ENCODE measurements at regions of chr1 and their contacts with region 1.

Region 1: GRCh38 chr1:161038523-161039153 is at the start of gene TSTD1:
- DNase-seq: peak; percentile 89
- H3K4me3 Mint-ChIP-seq: peak within 1 kb of the TSS; percentile 88
- H3K27ac Mint-ChIP-seq: peak within 1 kb of the TSS; percentile 88
- H3K4me1 Mint-ChIP-seq: peaks cover 50% of the 10 kb centered on the region
- H3K27me3 Mint-ChIP-seq: no peaks in the 10 kb centered on the region
- total RNA-seq, gene TSTD1: 56.1 to 63.8 TPM

Region 2: GRCh38 chr1:160981584-160982411 is 56.8 kb before region 1 on chr1:
- CTCF ChIA-PET with region 1: no interaction called
- POLR2A ChIA-PET with region 1: no interaction called
- DNase-seq: no peak
- H3K4me3 Mint-ChIP-seq: peak overlapping the region; percentile 53
- H3K27ac Mint-ChIP-seq: no peak overlapping the region
- H3K4me1 Mint-ChIP-seq: peaks cover 9% of the 10 kb centered on the region
- H3K27me3 Mint-ChIP-seq: peaks cover 33% of the 10 kb centered on the region

Region 3: GRCh38 chr1:160997323-160998038 is 41.2 kb before region 1 on chr1:
- CTCF ChIA-PET with region 1: interaction called, 13 read pairs
- POLR2A ChIA-PET with region 1: no interaction called
- DNase-seq: peak; percentile 59
- H3K4me3 Mint-ChIP-seq: no peak overlapping the region
- H3K27ac Mint-ChIP-seq: no peak overlapping the region
- H3K4me1 Mint-ChIP-seq: peaks cover 9% of the 10 kb centered on the region
- H3K27me3 Mint-ChIP-seq: no peaks in the 10 kb centered on the region

Region 4: GRCh38 chr1:161013488-161014230 is 25.0 kb before region 1 on chr1:
- CTCF ChIA-PET with region 1: interaction called, 4 read pairs
- POLR2A ChIA-PET with region 1: interaction called, 12 read pairs
- DNase-seq: peak; percentile 75
- H3K4me3 Mint-ChIP-seq: peak overlapping the region; percentile 66
- H3K27ac Mint-ChIP-seq: peak overlapping the region; percentile 94
- H3K4me1 Mint-ChIP-seq: peaks cover 35% of the 10 kb centered on the region
- H3K27me3 Mint-ChIP-seq: no peaks in the 10 kb centered on the region

Region 5: DNA sequence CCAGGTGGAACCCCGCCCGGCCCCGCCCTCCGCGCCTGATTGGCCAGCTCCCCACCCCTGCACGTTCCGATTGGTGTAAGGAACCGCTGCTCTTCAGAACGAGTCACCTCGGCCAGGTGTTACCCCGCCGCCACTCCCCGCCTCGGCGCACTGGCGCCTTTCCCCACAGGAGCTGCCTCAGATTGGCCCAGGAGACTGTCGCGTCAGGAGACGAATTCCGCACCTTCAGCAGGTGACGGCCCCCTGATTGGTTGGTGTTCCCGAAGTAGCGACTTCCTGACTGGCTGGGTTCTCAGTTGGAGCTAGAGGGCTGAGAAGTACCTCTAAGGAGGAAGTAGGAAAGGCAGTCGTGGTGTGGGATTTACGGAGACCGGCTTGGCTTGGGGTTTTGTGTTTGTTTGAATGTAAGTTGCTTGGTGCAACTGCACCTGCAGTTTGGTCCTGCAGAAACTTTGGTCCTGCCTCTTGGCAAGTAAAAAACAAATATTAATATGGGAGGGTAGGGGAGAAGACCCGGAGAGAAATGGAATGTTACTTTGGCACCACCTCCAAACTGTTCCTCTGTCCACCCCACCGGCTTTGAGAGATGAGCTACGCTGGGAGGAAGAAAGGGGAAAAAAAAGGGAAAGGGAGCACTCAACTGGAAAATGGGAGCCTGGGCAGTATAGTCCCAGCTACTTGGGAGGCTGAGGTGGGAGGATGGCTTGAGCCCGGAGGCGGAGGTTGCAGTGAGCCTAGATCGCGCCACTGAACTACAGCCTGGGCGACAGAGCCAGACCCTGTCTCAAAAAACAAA is 17.3 kb before region 1 on chr1:
- CTCF ChIA-PET with region 1: interaction called, 6 read pairs
- POLR2A ChIA-PET with region 1: interaction called, 41 read pairs
- DNase-seq: peak; percentile 86
- H3K4me3 Mint-ChIP-seq: peak overlapping the region; percentile 85
- H3K27ac Mint-ChIP-seq: peak overlapping the region; percentile 65
- H3K4me1 Mint-ChIP-seq: peaks cover 31% of the 10 kb centered on the region
- H3K27me3 Mint-ChIP-seq: peaks cover 4% of the 10 kb centered on the region